Activated T-helper 1 cell treated with anti-CD3 and anti-CD28 coated beads, Interleukin-12 subunit alpha, Interleukin-12 subunit beta, Interleukin-2, Interleukin-4 antibody, amounts not matched to agents 30 ng/mL and 10 ng/mL and 1 ng/mL, durations not matched to agents 14 hours and 24 hours and 36 hours (primary cell): ENCODE measurements at regions of chr15 and their contacts with region 1.

Region 1: GRCh38 chr15:60798821-60799220 is 319.9 kb upstream of the ICE2 start:
- DNase-seq: no peak
- H3K4me3 Mint-ChIP-seq: no peak overlapping the region
- H3K27ac Mint-ChIP-seq: peak overlapping the region; percentile 82
- H3K4me1 Mint-ChIP-seq: peaks cover 76% of the 10 kb centered on the region
- H3K27me3 Mint-ChIP-seq: no peaks in the 10 kb centered on the region

Region 2: DNA sequence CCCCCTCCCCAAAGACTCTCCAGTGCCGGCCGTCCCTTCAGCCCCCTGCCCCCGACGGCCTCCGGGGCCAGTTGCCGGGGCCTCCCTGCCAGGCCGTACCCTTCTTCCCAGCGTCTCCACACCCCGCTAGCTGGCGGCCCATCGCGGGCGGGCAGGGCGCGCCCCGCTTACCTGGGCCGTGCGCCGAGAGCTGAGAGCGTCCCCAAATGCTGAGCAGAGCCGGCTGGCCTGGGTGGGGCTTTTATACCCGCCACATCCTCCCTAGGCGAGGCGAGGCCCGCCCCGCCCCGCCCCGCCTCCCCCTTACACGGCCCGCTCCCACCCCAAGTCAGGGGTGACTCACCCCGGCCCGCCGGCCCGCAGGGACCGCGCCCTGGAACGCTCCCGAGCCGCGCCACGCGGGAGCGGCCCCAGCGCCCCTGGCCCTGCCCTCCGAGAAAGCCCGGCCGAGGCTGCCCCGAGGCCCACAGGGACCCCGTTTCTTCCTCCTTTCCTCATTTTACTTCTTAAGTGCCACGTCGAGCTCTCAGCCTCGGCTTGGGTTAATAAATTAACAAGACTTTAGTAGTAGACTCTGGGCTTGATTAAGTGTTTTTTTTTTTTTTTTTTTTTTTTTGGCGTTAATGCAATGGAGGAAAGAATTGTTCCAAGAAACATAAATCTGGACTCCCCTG is 400.9 kb before region 1 on chr15 and contains the start of gene ANXA2:
- intact Hi-C with region 1: loop called (anchors 2 kb)
- DNase-seq: peak; percentile 80
- H3K4me3 Mint-ChIP-seq: peak within 1 kb of the TSS; percentile 97
- H3K27ac Mint-ChIP-seq: peak within 1 kb of the TSS; percentile 97
- H3K4me1 Mint-ChIP-seq: peaks cover 56% of the 10 kb centered on the region
- H3K27me3 Mint-ChIP-seq: no peaks in the 10 kb centered on the region
- total RNA-seq, gene ANXA2: 243 and 247 TPM in 2 replicates

Region 3: GRCh38 chr15:60649845-60650548 is 148.8 kb before region 1 on chr15:
- intact Hi-C with region 1: loop called (anchors 1 kb)
- DNase-seq: peak; percentile 46
- H3K4me3 Mint-ChIP-seq: peak overlapping the region; percentile 70
- H3K27ac Mint-ChIP-seq: peak overlapping the region; percentile 89
- H3K4me1 Mint-ChIP-seq: peaks cover 69% of the 10 kb centered on the region
- H3K27me3 Mint-ChIP-seq: peaks cover under 1% of the 10 kb centered on the region

Region 4: DNA sequence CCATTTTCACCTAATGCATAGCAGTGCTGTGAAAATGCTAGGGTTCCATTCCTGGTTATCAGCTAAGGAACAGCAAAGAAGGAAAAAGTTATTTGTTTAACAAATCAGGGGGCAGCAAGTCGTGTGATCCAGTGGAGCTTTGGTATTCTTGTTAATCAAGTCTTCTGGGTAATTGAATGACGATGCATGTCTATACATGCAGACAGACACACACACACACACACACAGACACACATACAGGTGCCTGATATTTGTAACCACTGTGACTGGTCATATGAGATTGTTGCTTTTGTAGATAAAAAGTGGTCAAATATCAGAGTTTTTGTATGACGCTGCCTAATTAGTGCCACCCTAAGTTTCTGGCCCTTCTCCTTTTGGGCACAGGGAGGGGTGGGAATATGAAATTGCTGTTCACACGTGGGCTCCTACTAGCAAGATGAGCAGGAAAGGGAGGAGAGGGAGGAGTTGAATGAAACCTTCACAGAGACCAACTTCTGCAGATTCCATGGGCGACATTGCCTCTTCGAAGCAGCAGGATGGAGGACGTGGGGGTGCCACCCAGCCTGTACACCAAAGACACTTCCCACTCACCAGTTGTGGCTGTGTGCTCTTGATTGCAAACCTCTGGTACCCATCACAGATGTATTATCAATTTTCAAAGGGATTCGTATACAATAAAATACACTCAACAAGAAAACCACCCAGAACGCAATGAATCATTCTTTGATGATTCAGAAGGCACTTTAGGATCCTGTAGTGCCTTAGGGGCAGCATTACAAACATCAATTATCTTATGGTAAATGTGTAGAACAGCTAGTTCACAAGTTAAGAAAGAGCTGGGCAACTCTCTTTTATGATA is 37.9 kb before region 1 on chr15:
- intact Hi-C with region 1: loop called (anchors 1 kb)
- DNase-seq: no peak
- H3K4me3 Mint-ChIP-seq: no peak overlapping the region
- H3K27ac Mint-ChIP-seq: peak overlapping the region; percentile 41
- H3K4me1 Mint-ChIP-seq: peaks cover 26% of the 10 kb centered on the region
- H3K27me3 Mint-ChIP-seq: peaks cover 2% of the 10 kb centered on the region

Region 5: DNA sequence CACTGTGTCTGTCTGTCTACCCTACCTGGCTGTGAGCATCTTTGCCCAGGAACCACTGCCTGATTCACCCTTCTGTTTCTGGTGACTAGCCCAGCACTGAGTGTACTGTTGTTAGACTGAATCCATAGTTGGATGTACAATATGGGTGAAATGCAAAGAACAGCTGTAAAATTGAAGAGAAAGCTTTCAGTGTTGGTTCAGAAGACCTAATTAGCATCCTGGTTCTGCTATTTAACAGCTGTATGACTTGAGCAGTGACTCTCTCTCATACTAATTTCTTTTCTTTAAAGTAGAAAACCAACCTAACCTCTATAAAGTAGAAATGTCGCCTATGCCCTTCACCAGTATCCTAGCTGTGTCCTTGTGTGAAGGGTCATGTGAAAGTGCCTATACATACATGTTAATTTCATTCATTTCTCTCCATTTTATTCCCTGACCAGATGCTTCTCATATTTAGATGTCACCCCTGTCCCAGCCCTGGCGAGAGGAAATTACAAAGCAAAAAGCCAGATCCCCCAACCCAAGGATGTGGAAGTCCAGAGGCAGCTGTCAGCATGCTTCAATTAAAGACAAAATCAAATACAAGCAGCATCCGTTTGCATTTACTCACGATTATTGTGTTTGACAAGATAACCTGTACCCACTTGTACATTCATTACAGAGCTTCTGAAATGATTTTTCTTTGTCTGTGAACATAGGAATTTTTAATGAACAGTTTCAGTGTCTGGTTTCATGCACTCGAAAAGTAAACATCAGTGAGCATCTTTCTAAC is 14.2 kb before region 1 on chr15:
- intact Hi-C with region 1: loop called (anchors 1 kb)
- DNase-seq: no peak
- H3K4me3 Mint-ChIP-seq: no peak overlapping the region
- H3K27ac Mint-ChIP-seq: no peak overlapping the region
- H3K4me1 Mint-ChIP-seq: peaks cover 40% of the 10 kb centered on the region
- H3K27me3 Mint-ChIP-seq: no peaks in the 10 kb centered on the region

Region 6: DNA sequence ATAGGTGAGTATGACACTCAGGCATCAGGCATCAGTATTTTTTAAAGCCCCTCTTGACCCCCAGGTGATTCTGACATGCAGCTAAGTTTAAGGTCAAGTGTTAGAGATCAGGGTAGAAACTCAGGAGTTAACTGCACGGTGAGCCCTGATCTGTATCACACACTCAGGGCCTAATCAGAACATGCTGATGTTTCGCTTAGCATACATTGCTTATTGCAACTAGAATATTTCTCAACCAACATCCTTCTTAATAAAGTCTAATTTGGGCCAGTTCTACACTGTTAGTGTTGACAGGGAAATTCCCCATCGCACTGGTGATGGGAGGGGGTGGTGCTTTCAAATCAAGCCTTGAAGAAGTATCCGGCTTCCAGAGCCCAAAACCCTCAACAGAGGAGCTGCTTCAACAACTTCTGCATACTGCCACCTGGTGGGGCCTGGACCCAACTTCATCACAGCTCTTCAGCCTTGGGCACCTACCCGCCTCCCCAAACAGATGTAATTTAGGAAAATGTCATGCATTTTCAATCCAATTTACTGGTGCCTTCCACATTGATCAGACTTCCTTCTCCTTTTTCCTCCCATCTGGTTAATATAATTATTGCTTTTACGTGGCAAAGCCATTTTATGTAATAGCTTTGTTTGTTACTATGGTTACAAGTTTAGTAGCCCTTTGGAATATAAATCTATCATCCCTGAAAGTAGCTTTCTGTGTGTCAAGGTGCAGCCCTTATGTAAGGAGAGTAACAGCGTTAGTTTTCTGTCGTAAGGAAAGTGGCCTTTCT is 118.0 kb after region 1 on chr15:
- intact Hi-C with region 1: loop called (anchors 5 kb)
- DNase-seq: peak; percentile 80
- H3K4me3 Mint-ChIP-seq: peak overlapping the region; percentile 17
- H3K27ac Mint-ChIP-seq: peak overlapping the region; percentile 64
- H3K4me1 Mint-ChIP-seq: peaks cover 32% of the 10 kb centered on the region
- H3K27me3 Mint-ChIP-seq: peaks cover 2% of the 10 kb centered on the region

Region 7: GRCh38 chr15:61038387-61038786 is 239.6 kb after region 1 on chr15:
- intact Hi-C with region 1: no loop called
- DNase-seq: no peak
- H3K4me3 Mint-ChIP-seq: no peak overlapping the region
- H3K27ac Mint-ChIP-seq: no peak overlapping the region
- H3K4me1 Mint-ChIP-seq: no peaks in the 10 kb centered on the region
- H3K27me3 Mint-ChIP-seq: peaks cover 19% of the 10 kb centered on the region